ENCODE measurements at regions of chr4 and their contacts with region 1.

Region 1: GRCh38 chr4:174365018-174365587 is 81.4 kb downstream of the CEP44 start:
- DNase-seq: peak; percentile 55
- H3K4me3 ChIP-seq: no peak overlapping the region
- H3K27ac ChIP-seq: no peak overlapping the region
- H3K4me1 ChIP-seq: no peaks in the 10 kb centered on the region
- H3K27me3 ChIP-seq: no peaks in the 10 kb centered on the region
- CTCF ChIP-seq: peak; percentile 70

Region 2: GRCh38 chr4:174522183-174523048 is 157.3 kb after region 1 on chr4 and contains the start of gene HPGD:
- CTCF ChIA-PET with region 1: no interaction called
- POLR2A ChIA-PET with region 1: no interaction called
- intact Hi-C with region 1: loop called (anchors 5 kb)
- DNase-seq: peak; percentile 61
- H3K4me3 ChIP-seq: peak within 1 kb of the TSS; percentile 52
- H3K27ac ChIP-seq: no peak within 1 kb of the TSS
- H3K4me1 ChIP-seq: peaks cover 4% of the 10 kb centered on the region
- H3K27me3 ChIP-seq: peaks cover 40% of the 10 kb centered on the region
- CTCF ChIP-seq: no peak
- total RNA-seq, gene HPGD: 1.3 and 1.7 TPM in 2 replicates

Region 3: GRCh38 chr4:174631901-174632758 is 267.0 kb after region 1 on chr4:
- CTCF ChIA-PET with region 1: interaction called, 3 read pairs
- POLR2A ChIA-PET with region 1: no interaction called
- intact Hi-C with region 1: loop called (anchors 1 kb)
- DNase-seq: peak; percentile 75
- H3K4me3 ChIP-seq: no peak overlapping the region
- H3K27ac ChIP-seq: no peak overlapping the region
- H3K4me1 ChIP-seq: peaks cover 7% of the 10 kb centered on the region
- H3K27me3 ChIP-seq: no peaks in the 10 kb centered on the region
- CTCF ChIP-seq: peak; percentile 90

Region 4: GRCh38 chr4:174714393-174715211 is 349.5 kb after region 1 on chr4:
- CTCF ChIA-PET with region 1: no interaction called
- POLR2A ChIA-PET with region 1: no interaction called
- intact Hi-C with region 1: loop called (anchors 1 kb)
- DNase-seq: peak; percentile 68
- H3K4me3 ChIP-seq: no peak overlapping the region
- H3K27ac ChIP-seq: no peak overlapping the region
- H3K4me1 ChIP-seq: peaks cover 3% of the 10 kb centered on the region
- H3K27me3 ChIP-seq: no peaks in the 10 kb centered on the region
- CTCF ChIP-seq: peak; percentile 84

Region 5: GRCh38 chr4:175253184-175253902 is 888.2 kb after region 1 on chr4:
- CTCF ChIA-PET with region 1: no interaction called
- POLR2A ChIA-PET with region 1: no interaction called
- intact Hi-C with region 1: loop called (anchors 5 kb)
- DNase-seq: peak; percentile 21
- H3K4me3 ChIP-seq: no peak overlapping the region
- H3K27ac ChIP-seq: no peak overlapping the region
- H3K4me1 ChIP-seq: no peaks in the 10 kb centered on the region
- H3K27me3 ChIP-seq: no peaks in the 10 kb centered on the region
- CTCF ChIP-seq: peak; percentile 59